Heart left ventricle (tissue), 16 donors: ENCODE measurements at regions of chr1 and their contacts with region 1.

Region 1: GRCh38 chr1:162541619-162542141 is 19.8 kb upstream of the UAP1 start:
- DNase-seq: peak in 4 of 5 donors; percentile 51 to 76 (median 60)
- ATAC-seq: peak; percentile 34 to 95 (median 92)
- H3K4me3 ChIP-seq: no peak overlapping the region
- H3K27ac ChIP-seq: peak overlapping the region; percentile 4 to 78 (median 54)
- H3K4me1 ChIP-seq: peaks cover 0 to 14% (median 3%) of the 10 kb centered on the region in 12 donors
- H3K27me3 ChIP-seq: no peaks in the 10 kb centered on the region
- CTCF ChIP-seq: no peak
- POLR2A ChIP-seq: no peak

Region 2: DNA sequence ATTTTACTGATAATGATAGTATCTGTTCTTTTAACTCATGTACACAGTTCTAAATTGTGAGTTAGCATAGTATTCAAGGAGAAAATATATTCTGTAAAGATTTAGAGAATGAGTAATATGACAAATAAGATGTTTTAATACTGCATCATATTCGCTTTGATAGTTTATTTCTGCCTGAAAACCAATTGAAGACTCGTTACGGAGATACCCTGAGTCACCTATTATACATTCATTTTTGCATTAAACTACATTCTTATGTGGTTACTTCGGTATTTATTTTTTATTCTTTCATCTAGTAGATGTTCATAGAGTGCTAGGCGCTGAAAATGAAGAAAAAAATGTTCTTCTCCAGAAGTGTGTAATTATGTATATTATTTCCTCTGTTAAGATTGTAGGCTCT is 38.8 kb before region 1 on chr1:
- intact Hi-C with region 1: loop called in 1 of 10 experiments (anchors 2 kb)
- DNase-seq: no peak
- ATAC-seq: no peak
- H3K4me3 ChIP-seq: no peak overlapping the region
- H3K27ac ChIP-seq: no peak overlapping the region
- H3K4me1 ChIP-seq: peaks cover 5 to 39% (median 13%) of the 10 kb centered on the region in 12 donors
- H3K27me3 ChIP-seq: no peaks in the 10 kb centered on the region
- CTCF ChIP-seq: no peak
- POLR2A ChIP-seq: no peak

Region 3: DNA sequence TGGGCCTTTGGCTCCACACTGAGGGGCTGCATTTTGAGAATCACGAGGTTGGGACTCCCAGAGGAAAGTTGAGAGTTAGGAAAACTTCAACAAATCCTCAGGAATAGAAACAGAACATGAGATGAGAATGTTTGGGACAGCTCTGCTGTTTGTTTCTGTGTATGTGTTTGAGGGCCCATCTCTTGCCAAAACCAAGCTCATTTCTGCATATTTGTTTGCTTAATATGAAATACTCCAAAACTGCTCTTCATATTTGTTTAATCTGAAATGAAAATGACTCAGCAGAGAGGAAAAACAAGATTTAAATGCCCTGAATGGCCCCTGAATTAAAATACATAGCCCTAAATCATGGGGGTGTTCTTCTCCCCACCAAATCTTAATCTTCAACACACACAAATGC is 168.7 kb after region 1 on chr1:
- intact Hi-C with region 1: no loop called
- DNase-seq: no peak
- ATAC-seq: peak in 1 of 4 donors; percentile 27
- H3K4me3 ChIP-seq: no peak overlapping the region
- H3K27ac ChIP-seq: peak overlapping the region in 6 of 12 donors; percentile 1 to 76 (median 22)
- H3K4me1 ChIP-seq: peaks cover 0 to 57% (median 8%) of the 10 kb centered on the region in 12 donors
- H3K27me3 ChIP-seq: no peaks in the 10 kb centered on the region
- CTCF ChIP-seq: no peak
- POLR2A ChIP-seq: no peak